Activated CD4-positive, alpha-beta memory T cell treated with anti-CD3 and anti-CD28 coated beads, Interleukin-2, amount 10 ng/mL, durations not matched to agents 7 days and 5 days (primary cell): ENCODE measurements at regions of chr10 and their contacts with region 1.

Region 1: GRCh38 chr10:5813287-5814109 is at the start of gene GDI2:
- DNase-seq: peak; percentile 97
- H3K4me3 Mint-ChIP-seq: peak within 1 kb of the TSS; percentile 92
- H3K27ac Mint-ChIP-seq: peak within 1 kb of the TSS; percentile 87
- H3K4me1 Mint-ChIP-seq: peaks cover 57% of the 10 kb centered on the region
- H3K27me3 Mint-ChIP-seq: no peaks in the 10 kb centered on the region
- total RNA-seq, gene GDI2: 218 to 220 TPM

Region 2: DNA sequence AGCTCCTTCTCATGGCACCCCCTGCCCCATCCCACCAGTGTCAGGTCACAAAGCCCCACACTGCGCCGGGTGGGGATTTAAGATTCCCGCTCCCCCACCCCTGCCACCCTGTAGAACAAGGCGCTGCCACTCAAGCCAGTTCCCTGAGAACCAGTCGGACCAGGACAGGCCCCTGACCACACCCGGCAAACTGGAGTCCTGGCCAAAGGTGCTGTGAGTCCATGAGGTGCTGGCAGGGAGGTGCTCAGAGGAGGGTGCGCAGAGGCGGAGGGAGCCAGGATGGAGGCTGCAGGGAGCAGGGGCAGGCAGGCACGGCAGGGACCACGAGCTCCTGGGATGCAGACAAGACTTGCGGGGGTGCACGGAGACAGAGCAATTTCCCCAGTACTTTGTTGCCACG is 19.4 kb after region 1 on chr10:
- CTCF ChIA-PET with region 1: no interaction called
- POLR2A ChIA-PET with region 1: no interaction called
- DNase-seq: no peak
- H3K4me3 Mint-ChIP-seq: no peak overlapping the region
- H3K27ac Mint-ChIP-seq: no peak overlapping the region
- H3K4me1 Mint-ChIP-seq: no peaks in the 10 kb centered on the region
- H3K27me3 Mint-ChIP-seq: no peaks in the 10 kb centered on the region

Region 3: GRCh38 chr10:5889624-5890451 is 76.3 kb after region 1 on chr10 and contains the starts of genes ANKRD16 and FBH1:
- CTCF ChIA-PET with region 1: interaction called, 5 read pairs
- POLR2A ChIA-PET with region 1: interaction called, 42 read pairs
- DNase-seq: peak; percentile 98
- H3K4me3 Mint-ChIP-seq: peak within 1 kb of the TSS; percentile 91
- H3K27ac Mint-ChIP-seq: peak within 1 kb of the TSS; percentile 68
- H3K4me1 Mint-ChIP-seq: peaks cover 47% of the 10 kb centered on the region
- H3K27me3 Mint-ChIP-seq: no peaks in the 10 kb centered on the region
- total RNA-seq, gene ANKRD16: 3.3 to 5.4 TPM
- total RNA-seq, gene FBH1: 54.8 to 61.6 TPM

Region 4: DNA sequence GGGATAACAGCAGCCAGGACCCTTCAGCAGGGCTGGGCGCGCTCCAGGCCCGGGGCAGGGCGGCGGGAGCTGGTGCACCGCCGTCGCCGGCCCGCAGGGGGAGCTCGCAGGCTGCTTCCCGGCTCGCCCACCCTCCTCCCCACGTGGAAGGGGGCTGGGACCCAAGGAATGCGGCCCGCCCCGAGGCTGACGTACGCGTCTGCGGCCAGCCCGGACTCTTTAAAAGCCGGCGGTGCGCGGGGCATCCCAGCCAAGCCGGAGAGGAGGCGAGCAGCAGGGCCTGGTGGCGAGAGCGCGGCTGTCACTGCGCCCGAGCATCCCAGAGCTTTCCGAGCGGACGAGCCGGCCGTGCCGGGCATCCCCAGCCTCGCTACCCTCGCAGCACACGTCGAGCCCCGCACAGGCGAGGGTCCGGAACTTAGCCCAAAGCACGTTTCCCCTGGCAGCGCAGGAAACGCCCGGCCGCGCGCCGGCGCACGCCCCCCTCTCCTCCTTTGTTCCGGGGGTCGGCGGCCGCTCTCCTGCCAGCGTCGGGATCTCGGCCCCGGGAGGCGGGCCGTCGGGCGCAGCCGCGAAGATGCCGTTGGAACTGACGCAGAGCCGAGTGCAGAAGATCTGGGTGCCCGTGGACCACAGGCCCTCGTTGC is 389.3 kb after region 1 on chr10 and contains the start of gene PFKFB3:
- CTCF ChIA-PET with region 1: no interaction called
- POLR2A ChIA-PET with region 1: no interaction called
- DNase-seq: peak; percentile 93
- H3K4me3 Mint-ChIP-seq: peak within 1 kb of the TSS; percentile 96
- H3K27ac Mint-ChIP-seq: peak within 1 kb of the TSS; percentile 91
- H3K4me1 Mint-ChIP-seq: peaks cover 39% of the 10 kb centered on the region
- H3K27me3 Mint-ChIP-seq: peaks cover 2% of the 10 kb centered on the region
- total RNA-seq, gene PFKFB3: 66.8 to 69.4 TPM